Dendritic cell treated with granulocyte-macrophage colony-stimulating factor and Interleukin-4, amounts not matched to agents 40 ng/mL and 50 ng/mL, for 4 days (primary cell): ENCODE measurements at regions of chr7 and their contacts with region 1.

Region 1: GRCh38 chr7:31488562-31489203 is 25.2 kb upstream of the ITPRID1 start:
- H3K4me3 Mint-ChIP-seq: no peak overlapping the region
- H3K27ac Mint-ChIP-seq: no peak overlapping the region
- H3K4me1 Mint-ChIP-seq: peaks cover 12% of the 10 kb centered on the region
- H3K27me3 Mint-ChIP-seq: peaks cover 9% of the 10 kb centered on the region

Region 2: DNA sequence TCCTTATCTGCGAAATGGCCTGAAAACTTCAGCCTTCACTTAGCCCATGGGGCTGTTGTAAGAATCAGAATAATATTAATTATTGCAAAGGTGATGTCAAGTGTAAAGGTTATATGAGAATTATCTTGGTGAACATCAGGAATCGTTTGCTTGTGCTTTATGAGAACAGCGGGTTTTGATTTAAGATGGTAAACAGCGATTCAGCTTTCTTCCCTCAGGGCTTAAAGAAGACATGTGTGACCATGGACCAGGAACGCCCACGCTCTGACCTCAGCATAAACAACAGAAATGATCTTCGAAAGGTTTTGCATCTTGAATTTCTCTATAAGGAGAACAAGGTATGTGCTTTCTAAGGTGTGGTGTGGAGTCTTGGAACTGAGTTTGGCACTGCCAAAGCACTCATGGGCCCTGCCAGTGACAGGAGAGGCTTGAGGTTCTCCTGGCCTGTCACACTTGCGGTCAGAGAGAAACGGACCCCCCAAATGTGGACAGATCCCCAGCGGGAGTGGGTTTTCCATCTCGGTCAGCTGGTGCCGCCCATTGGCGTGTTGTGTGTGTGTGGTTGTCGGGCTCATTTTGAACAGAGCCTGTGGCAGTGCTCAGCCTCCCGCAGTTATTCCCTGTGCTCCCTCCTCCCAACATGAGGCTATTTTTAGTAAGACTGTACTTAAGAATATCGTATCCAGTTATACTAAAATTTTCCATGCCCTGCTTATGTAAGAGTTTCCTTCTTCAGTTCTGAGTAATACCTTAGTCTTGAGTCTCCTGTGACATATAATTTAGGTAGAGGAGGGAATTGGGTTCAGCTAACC is 710.3 kb before region 1 on chr7:
- intact Hi-C with region 1: no loop called
- H3K4me3 Mint-ChIP-seq: no peak overlapping the region
- H3K27ac Mint-ChIP-seq: no peak overlapping the region
- H3K4me1 Mint-ChIP-seq: no peaks in the 10 kb centered on the region
- H3K27me3 Mint-ChIP-seq: no peaks in the 10 kb centered on the region

Region 3: GRCh38 chr7:31134246-31135188 is 354.2 kb before region 1 on chr7:
- intact Hi-C with region 1: loop called (anchors 5 kb)
- H3K4me3 Mint-ChIP-seq: no peak overlapping the region
- H3K27ac Mint-ChIP-seq: no peak overlapping the region
- H3K4me1 Mint-ChIP-seq: peaks cover 5% of the 10 kb centered on the region
- H3K27me3 Mint-ChIP-seq: peaks cover 5% of the 10 kb centered on the region

Region 4: GRCh38 chr7:31373337-31374289 is 115.1 kb before region 1 on chr7:
- intact Hi-C with region 1: loop called (anchors 1 kb)
- H3K4me3 Mint-ChIP-seq: no peak overlapping the region
- H3K27ac Mint-ChIP-seq: no peak overlapping the region
- H3K4me1 Mint-ChIP-seq: no peaks in the 10 kb centered on the region
- H3K27me3 Mint-ChIP-seq: no peaks in the 10 kb centered on the region

Region 5: GRCh38 chr7:31384466-31384865 is 104.2 kb before region 1 on chr7:
- intact Hi-C with region 1: no loop called
- H3K4me3 Mint-ChIP-seq: no peak overlapping the region
- H3K27ac Mint-ChIP-seq: no peak overlapping the region
- H3K4me1 Mint-ChIP-seq: no peaks in the 10 kb centered on the region
- H3K27me3 Mint-ChIP-seq: peaks cover under 1% of the 10 kb centered on the region

Region 6: DNA sequence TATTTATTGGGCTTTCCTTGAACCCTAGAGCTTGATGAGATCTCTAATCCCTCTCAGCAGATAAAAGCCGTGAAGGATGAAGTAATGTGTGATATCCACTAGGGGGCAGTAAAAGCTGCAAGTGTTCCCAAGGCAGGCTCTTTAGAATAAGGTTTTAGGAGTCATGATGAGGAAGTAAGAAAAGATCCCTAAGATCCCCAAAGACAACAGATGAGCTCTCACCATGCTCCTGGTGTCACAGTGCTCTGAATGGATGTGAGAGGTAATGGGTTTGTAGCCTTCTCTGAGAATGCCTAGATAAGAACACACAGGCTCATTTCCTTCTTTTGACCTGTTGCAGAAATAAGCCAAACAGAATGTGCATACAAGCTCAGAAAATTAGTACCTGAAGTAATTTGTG is 45.2 kb before region 1 on chr7:
- intact Hi-C with region 1: loop called (anchors 1 kb)
- H3K4me3 Mint-ChIP-seq: no peak overlapping the region
- H3K27ac Mint-ChIP-seq: no peak overlapping the region
- H3K4me1 Mint-ChIP-seq: no peaks in the 10 kb centered on the region
- H3K27me3 Mint-ChIP-seq: peaks cover 10% of the 10 kb centered on the region

Region 7: GRCh38 chr7:31550432-31550831 is 61.7 kb after region 1 on chr7:
- intact Hi-C with region 1: no loop called
- H3K4me3 Mint-ChIP-seq: no peak overlapping the region
- H3K27ac Mint-ChIP-seq: no peak overlapping the region
- H3K4me1 Mint-ChIP-seq: no peaks in the 10 kb centered on the region
- H3K27me3 Mint-ChIP-seq: no peaks in the 10 kb centered on the region

Region 8: GRCh38 chr7:31720366-31720765 is 231.7 kb after region 1 on chr7:
- intact Hi-C with region 1: no loop called
- H3K4me3 Mint-ChIP-seq: no peak overlapping the region
- H3K27ac Mint-ChIP-seq: no peak overlapping the region
- H3K4me1 Mint-ChIP-seq: no peaks in the 10 kb centered on the region
- H3K27me3 Mint-ChIP-seq: peaks cover 5% of the 10 kb centered on the region